Panc1 (cell line): ENCODE measurements at regions of chr19 and their contacts with region 1.

Region 1: DNA sequence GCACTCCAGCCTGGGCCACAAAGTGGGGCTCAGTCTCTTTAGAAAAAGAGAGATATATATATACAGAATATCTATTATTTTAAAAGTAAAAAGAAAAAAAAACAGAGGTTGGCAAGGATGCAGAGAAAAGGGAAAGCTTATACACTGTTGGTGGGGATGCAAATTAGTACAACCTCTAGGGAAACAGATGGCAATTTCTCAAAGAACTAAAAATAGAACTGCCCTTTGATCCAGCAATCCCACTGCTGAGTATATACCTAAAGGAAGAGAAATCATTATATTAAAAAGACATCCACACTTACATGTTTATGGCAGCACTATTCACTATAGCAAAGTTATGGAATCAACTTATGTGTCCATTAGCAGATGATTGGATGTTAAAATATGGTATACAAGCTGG is 28.6 kb upstream of the SLC1A6 start:
- DNase-seq: no peak
- ATAC-seq: no peak
- H3K4me3 ChIP-seq: no peak overlapping the region
- H3K27ac ChIP-seq: no peak overlapping the region
- H3K4me1 ChIP-seq: no peaks in the 10 kb centered on the region
- H3K27me3 ChIP-seq: no peaks in the 10 kb centered on the region
- CTCF ChIP-seq: no peak

Region 2: DNA sequence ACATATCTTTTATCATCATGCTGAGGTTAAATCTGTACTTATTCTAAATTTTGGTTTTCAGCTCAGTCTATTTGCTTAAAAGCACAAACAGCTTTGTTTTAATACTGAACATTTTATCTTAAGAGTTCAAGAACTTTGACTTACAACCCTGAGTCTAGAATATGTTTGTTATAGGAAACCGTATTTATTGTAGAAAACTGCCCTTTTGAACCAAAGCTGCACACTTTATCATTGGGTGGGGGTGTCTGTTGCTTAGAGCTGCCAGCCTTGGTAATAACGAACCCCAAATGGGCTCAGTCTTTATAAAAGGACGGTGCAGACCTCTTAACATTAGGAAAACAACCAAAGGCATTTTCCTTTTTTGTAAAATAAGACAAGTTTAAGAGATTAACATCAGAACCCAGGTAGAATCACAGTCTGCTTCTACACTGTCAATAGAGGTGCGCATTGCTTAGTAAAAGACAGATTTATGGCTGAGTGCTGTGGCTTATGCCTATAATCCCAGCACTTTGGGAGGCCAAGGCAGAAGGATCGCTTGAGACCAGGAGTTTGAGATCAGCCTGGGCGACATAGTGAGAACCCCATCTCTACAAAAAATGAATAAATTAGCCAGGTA is 348.3 kb before region 1 on chr19:
- CTCF ChIA-PET with region 1: no interaction called
- POLR2A ChIA-PET with region 1: interaction called, 18 read pairs
- in situ Hi-C with region 1: no loop called
- intact Hi-C with region 1: no loop called
- DNase-seq: no peak
- ATAC-seq: no peak
- H3K4me3 ChIP-seq: no peak overlapping the region
- H3K27ac ChIP-seq: no peak overlapping the region
- H3K4me1 ChIP-seq: no peaks in the 10 kb centered on the region
- H3K27me3 ChIP-seq: no peaks in the 10 kb centered on the region
- CTCF ChIP-seq: no peak

Region 3: DNA sequence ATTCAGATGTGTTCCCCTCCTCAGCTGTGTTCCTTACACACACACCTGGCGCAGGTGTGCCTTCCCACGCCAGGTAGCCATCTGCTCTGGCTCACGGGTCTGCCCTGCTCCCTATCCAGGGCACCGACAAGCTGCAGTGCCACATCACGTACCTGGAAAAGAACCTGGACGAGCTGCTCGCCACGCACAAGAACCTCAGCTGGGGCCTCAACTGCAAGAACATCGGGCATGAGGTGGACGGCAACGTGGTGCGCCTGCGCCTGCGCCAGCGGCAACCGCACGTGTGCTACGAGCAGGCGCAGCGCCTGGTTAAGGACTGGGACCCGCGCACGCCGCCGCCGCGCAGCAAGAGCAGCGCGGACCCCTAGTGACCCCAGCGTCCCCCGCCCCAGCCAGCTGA is 14.4 kb after region 1 on chr19:
- CTCF ChIA-PET with region 1: no interaction called
- POLR2A ChIA-PET with region 1: no interaction called
- in situ Hi-C with region 1: no loop called
- intact Hi-C with region 1: no loop called
- DNase-seq: no peak
- ATAC-seq: no peak
- H3K4me3 ChIP-seq: no peak overlapping the region
- H3K27ac ChIP-seq: no peak overlapping the region
- H3K4me1 ChIP-seq: no peaks in the 10 kb centered on the region
- H3K27me3 ChIP-seq: no peaks in the 10 kb centered on the region
- CTCF ChIP-seq: no peak